CD8-positive, alpha-beta T cell (primary cell): ENCODE measurements at regions of chrX and their contacts with region 1.

Region 1: GRCh38 chrX:65985922-65986588 is 53.8 kb downstream of the VSIG4 start:
- DNase-seq: peak in 8 of 9 experiments; percentile 13 to 84 (median 50)
- ATAC-seq: peak; percentile 97
- H3K4me3 ChIP-seq: no peak overlapping the region
- H3K4me3 Mint-ChIP-seq: no peak overlapping the region
- H3K27ac ChIP-seq: peak overlapping the region in 1 of 2 experiments; percentile 59
- H3K27ac Mint-ChIP-seq: peak overlapping the region; percentile 62
- H3K4me1 ChIP-seq: peaks cover 6% of the 10 kb centered on the region
- H3K4me1 Mint-ChIP-seq: peaks cover 14% of the 10 kb centered on the region
- H3K27me3 ChIP-seq: no peaks in the 10 kb centered on the region
- H3K27me3 Mint-ChIP-seq: no peaks in the 10 kb centered on the region
- CTCF ChIP-seq: peak; percentile 47

Region 2: DNA sequence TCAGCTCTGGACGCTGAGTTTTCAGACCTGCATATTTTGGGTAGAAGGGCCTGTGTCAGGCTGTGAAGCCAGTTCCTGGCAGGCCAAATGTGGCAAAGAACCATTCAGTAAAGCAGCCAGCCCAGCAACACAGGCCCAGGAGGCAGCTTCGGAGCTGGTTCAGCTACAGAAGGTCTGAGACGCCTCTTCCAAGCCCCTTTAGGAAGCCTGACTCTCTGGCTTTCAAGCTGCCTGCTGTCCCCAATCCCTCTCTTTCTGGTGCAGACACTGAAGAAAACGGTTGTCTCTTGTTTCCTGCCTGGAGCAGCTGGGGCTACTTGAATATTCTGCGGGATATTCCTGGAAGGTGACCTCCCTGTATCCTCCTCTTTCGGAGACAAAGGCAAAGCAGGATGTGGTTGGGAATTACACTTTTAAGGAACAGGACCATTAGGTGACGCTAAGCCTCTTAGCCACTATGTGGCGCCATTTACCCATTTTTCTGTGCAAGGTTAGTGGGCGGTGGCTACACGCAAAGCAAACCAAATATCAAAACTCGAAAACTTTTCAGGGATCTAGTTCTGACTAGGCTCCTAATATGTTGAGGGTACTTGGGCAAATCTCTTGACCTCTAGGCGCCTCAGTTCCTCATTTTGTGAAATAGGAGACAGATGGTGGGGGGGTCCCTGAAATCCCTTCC is 404.3 kb before region 1 on chrX:
- CTCF ChIA-PET with region 1: interaction called, 28 read pairs
- POLR2A ChIA-PET with region 1: no interaction called
- intact Hi-C with region 1: loop called (anchors 1 kb)
- DNase-seq: peak in 8 of 9 experiments; percentile 31 to 76 (median 60)
- ATAC-seq: peak; percentile 57
- H3K4me3 ChIP-seq: no peak overlapping the region
- H3K4me3 Mint-ChIP-seq: no peak overlapping the region
- H3K27ac ChIP-seq: no peak overlapping the region
- H3K27ac Mint-ChIP-seq: no peak overlapping the region
- H3K4me1 ChIP-seq: no peaks in the 10 kb centered on the region
- H3K4me1 Mint-ChIP-seq: no peaks in the 10 kb centered on the region
- H3K27me3 ChIP-seq: no peaks in the 10 kb centered on the region
- H3K27me3 Mint-ChIP-seq: no peaks in the 10 kb centered on the region
- CTCF ChIP-seq: peak; percentile 67

Region 3: DNA sequence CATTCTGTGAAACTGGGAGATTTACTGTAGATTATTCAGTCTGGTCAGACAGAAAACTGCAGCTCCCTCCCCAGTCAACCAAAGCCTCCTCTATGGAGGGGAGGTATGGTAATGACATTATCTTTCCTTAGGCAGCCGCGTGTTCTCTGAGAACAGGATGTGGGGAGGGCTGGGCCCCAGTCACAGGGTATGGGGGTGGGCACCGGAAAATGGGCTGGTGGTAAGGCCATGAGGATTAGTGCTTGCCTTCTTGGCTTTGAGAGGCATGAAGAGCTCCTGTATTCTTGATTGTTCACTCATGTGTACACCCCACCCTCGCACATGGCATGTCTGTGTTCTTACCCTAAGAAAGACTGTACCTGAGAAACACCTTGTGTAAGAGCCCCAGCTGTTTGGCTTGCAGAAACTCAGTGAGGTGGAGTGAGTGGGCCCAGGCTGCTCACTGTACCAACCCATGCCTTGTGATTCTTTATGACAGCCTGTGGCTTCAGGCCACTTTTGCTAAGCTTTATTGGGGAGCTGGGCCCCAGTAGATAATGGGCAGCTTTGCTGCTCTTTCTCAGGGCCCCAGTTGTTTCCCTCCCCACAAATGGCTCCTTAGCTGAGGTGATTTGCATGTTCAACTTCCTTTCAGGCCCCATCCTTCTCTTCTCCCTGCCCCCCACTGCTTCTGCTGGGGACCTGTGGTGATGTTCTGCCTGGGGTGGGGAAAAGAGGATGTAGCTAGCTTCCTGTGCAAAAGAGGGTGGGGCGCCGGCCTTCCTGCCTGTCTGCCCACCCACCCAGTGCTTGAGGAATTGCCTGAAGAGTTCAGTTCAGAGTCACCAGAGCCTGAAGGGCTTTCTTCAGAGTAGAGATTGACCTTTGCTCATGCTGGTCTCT is 287.9 kb before region 1 on chrX:
- CTCF ChIA-PET with region 1: no interaction called
- POLR2A ChIA-PET with region 1: no interaction called
- intact Hi-C with region 1: loop called in 1 of 2 experiments (anchors 10 kb)
- DNase-seq: peak; percentile 26 to 85 (median 71)
- ATAC-seq: peak; percentile 77
- H3K4me3 ChIP-seq: peak overlapping the region; percentile 5 to 23
- H3K4me3 Mint-ChIP-seq: peak overlapping the region; percentile 81
- H3K27ac ChIP-seq: peak overlapping the region; percentile 38 to 90
- H3K27ac Mint-ChIP-seq: peak overlapping the region; percentile 97
- H3K4me1 ChIP-seq: peaks cover 92% of the 10 kb centered on the region
- H3K4me1 Mint-ChIP-seq: peaks cover 87% of the 10 kb centered on the region
- H3K27me3 ChIP-seq: no peaks in the 10 kb centered on the region
- H3K27me3 Mint-ChIP-seq: no peaks in the 10 kb centered on the region
- CTCF ChIP-seq: no peak

Region 4: GRCh38 chrX:65731684-65732289 is 254.3 kb before region 1 on chrX:
- CTCF ChIA-PET with region 1: no interaction called
- POLR2A ChIA-PET with region 1: no interaction called
- intact Hi-C with region 1: loop called (anchors 5 to 10 kb)
- DNase-seq: no peak
- ATAC-seq: no peak
- H3K4me3 ChIP-seq: no peak overlapping the region
- H3K4me3 Mint-ChIP-seq: no peak overlapping the region
- H3K27ac ChIP-seq: peak overlapping the region in 1 of 2 experiments; percentile 19
- H3K27ac Mint-ChIP-seq: peak overlapping the region; percentile 64
- H3K4me1 ChIP-seq: peaks cover 23% of the 10 kb centered on the region
- H3K4me1 Mint-ChIP-seq: peaks cover 52% of the 10 kb centered on the region
- H3K27me3 ChIP-seq: no peaks in the 10 kb centered on the region
- H3K27me3 Mint-ChIP-seq: no peaks in the 10 kb centered on the region
- CTCF ChIP-seq: no peak

Region 5: GRCh38 chrX:65886813-65887212 is 99.2 kb before region 1 on chrX:
- CTCF ChIA-PET with region 1: no interaction called
- POLR2A ChIA-PET with region 1: no interaction called
- intact Hi-C with region 1: no loop called
- DNase-seq: no peak
- ATAC-seq: no peak
- H3K4me3 ChIP-seq: no peak overlapping the region
- H3K4me3 Mint-ChIP-seq: no peak overlapping the region
- H3K27ac ChIP-seq: no peak overlapping the region
- H3K27ac Mint-ChIP-seq: no peak overlapping the region
- H3K4me1 ChIP-seq: peaks cover 9% of the 10 kb centered on the region
- H3K4me1 Mint-ChIP-seq: peaks cover 21% of the 10 kb centered on the region
- H3K27me3 ChIP-seq: no peaks in the 10 kb centered on the region
- H3K27me3 Mint-ChIP-seq: no peaks in the 10 kb centered on the region
- CTCF ChIP-seq: no peak

Region 6: DNA sequence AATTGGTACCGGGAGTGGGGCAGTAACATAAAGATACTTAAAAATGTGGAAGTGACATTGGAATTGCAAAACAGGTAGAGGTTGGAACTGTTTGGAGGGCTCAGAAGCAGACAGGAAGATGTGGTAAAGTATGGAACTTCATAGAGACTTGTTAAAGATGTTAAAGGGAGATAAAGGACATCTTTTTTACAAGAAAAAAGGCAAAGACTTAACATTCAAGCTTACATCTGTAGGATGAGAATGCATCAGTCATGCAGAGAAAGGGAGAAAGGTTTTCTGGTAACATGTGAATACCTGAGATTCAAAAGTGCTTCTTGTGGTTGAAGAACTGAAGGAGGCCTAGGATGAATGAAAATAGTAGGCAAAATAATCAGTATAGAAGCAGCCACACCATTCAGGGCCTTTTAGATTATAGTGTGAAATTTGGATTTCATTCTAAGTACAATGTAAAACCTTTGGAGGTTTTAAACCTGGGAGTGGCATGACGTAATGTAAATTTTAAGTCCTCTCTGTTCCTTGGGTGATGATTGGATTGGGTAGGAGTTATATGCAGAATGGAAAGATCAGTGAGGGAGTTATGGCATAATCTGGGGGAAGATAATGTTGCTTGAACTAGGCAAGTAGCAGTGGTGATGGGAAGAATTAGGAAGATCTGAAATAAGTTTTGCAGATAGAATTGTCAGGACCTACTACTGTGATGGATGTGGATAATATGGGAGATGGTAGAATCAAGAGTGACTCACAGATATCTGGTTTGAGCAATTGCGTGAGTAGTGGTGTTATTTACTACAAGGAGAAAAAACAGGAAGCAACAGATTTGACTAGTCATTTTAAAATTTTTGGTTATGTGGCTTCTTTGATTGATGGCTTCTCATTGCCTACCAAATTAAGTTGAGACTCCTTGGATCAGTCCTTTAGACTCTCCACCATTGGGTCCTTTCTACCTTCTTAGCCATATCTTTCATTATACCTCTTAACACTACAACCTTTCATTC is 84.9 kb before region 1 on chrX:
- CTCF ChIA-PET with region 1: no interaction called
- POLR2A ChIA-PET with region 1: no interaction called
- intact Hi-C with region 1: loop called in 1 of 2 experiments (anchors 10 kb)
- DNase-seq: no peak
- ATAC-seq: no peak
- H3K4me3 ChIP-seq: no peak overlapping the region
- H3K4me3 Mint-ChIP-seq: no peak overlapping the region
- H3K27ac ChIP-seq: no peak overlapping the region
- H3K27ac Mint-ChIP-seq: no peak overlapping the region
- H3K4me1 ChIP-seq: peaks cover 9% of the 10 kb centered on the region
- H3K4me1 Mint-ChIP-seq: peaks cover 13% of the 10 kb centered on the region
- H3K27me3 ChIP-seq: no peaks in the 10 kb centered on the region
- H3K27me3 Mint-ChIP-seq: no peaks in the 10 kb centered on the region
- CTCF ChIP-seq: no peak

Region 7: GRCh38 chrX:65948103-65948502 is 38.0 kb before region 1 on chrX:
- CTCF ChIA-PET with region 1: no interaction called
- POLR2A ChIA-PET with region 1: no interaction called
- intact Hi-C with region 1: no loop called
- DNase-seq: no peak
- ATAC-seq: no peak
- H3K4me3 ChIP-seq: no peak overlapping the region
- H3K4me3 Mint-ChIP-seq: no peak overlapping the region
- H3K27ac ChIP-seq: no peak overlapping the region
- H3K27ac Mint-ChIP-seq: no peak overlapping the region
- H3K4me1 ChIP-seq: peaks cover 7% of the 10 kb centered on the region
- H3K4me1 Mint-ChIP-seq: peaks cover 22% of the 10 kb centered on the region
- H3K27me3 ChIP-seq: no peaks in the 10 kb centered on the region
- H3K27me3 Mint-ChIP-seq: no peaks in the 10 kb centered on the region
- CTCF ChIP-seq: no peak